ENCODE measurements at regions of chr2 and their contacts with region 1.

Region 1: GRCh38 chr2:110812726-110813645 is 80.6 kb downstream of the ACOXL start:
- DNase-seq: peak; percentile 20
- ATAC-seq: peak; percentile 44
- H3K4me3 Mint-ChIP-seq: no peak overlapping the region
- H3K27ac Mint-ChIP-seq: no peak overlapping the region
- H3K4me1 Mint-ChIP-seq: peaks cover 18% of the 10 kb centered on the region
- H3K27me3 Mint-ChIP-seq: peaks cover 11% of the 10 kb centered on the region
- CTCF ChIP-seq: no peak

Region 2: GRCh38 chr2:110780461-110780860 is 32.5 kb before region 1 on chr2:
- CTCF ChIA-PET with region 1: no interaction called
- POLR2A ChIA-PET with region 1: no interaction called
- intact Hi-C with region 1: no loop called
- DNase-seq: no peak
- ATAC-seq: no peak
- H3K4me3 Mint-ChIP-seq: no peak overlapping the region
- H3K27ac Mint-ChIP-seq: no peak overlapping the region
- H3K4me1 Mint-ChIP-seq: no peaks in the 10 kb centered on the region
- H3K27me3 Mint-ChIP-seq: peaks cover 25% of the 10 kb centered on the region
- CTCF ChIP-seq: no peak

Region 3: DNA sequence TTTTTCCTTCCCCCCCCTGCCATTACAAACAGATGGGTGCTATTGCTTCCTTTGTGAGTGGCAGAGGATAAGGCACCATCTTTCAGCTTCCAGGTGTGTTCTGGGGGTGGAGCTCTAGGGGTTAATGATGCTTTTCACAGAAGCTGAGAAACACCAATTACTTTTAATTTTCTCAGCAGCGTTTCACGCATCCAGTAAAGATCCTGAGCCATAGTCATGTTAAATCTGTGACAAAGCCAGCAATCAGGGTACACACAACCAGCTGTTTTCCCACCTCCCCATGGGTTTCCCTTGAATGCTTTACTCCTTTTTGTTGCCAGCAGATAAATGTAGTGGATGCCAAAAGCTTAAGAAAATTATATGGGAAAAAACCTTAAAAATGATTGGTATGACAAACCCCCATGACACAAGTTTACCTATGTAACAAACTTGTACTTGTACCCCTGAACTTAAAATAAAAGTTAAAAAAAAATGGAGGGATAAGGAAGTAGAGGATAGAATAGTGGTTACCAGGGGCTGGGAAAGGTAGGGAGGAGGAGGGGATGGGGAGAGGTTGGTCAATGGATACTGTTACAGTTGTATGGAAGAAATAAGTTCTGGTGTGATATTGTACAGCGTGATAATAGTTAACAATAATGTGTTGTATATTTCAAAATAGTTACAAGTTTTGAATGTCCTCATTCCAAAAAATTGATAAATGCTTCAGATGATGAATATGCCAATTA is 10.6 kb before region 1 on chr2:
- CTCF ChIA-PET with region 1: no interaction called
- POLR2A ChIA-PET with region 1: no interaction called
- intact Hi-C with region 1: no loop called
- DNase-seq: no peak
- ATAC-seq: no peak
- H3K4me3 Mint-ChIP-seq: no peak overlapping the region
- H3K27ac Mint-ChIP-seq: no peak overlapping the region
- H3K4me1 Mint-ChIP-seq: peaks cover 17% of the 10 kb centered on the region
- H3K27me3 Mint-ChIP-seq: peaks cover 49% of the 10 kb centered on the region
- CTCF ChIP-seq: no peak

Region 4: GRCh38 chr2:110832740-110833139 is 19.8 kb after region 1 on chr2:
- CTCF ChIA-PET with region 1: interaction called, 16 read pairs
- POLR2A ChIA-PET with region 1: no interaction called
- intact Hi-C with region 1: no loop called
- DNase-seq: no peak
- ATAC-seq: no peak
- H3K4me3 Mint-ChIP-seq: no peak overlapping the region
- H3K27ac Mint-ChIP-seq: no peak overlapping the region
- H3K4me1 Mint-ChIP-seq: peaks cover 24% of the 10 kb centered on the region
- H3K27me3 Mint-ChIP-seq: peaks cover 8% of the 10 kb centered on the region
- CTCF ChIP-seq: no peak

Region 5: DNA sequence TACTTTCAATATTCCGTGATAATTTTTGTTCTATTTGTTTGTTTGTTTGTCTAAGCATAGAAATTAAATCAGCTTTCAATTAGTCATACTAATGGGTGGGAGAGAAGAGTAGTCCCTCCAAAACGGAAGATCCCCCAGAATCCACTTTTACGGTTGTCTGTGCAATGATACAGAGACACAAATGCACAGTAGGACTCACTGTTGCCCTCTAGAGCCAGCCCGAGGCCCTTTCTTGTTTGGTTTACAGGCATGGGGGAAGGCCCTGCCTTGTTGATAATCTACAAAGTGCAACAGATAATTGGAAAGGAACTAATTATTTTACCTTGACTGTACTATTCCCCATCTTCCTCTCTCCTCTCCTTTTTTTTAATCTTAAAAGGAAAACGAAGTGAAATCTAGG is 40.5 kb after region 1 on chr2:
- CTCF ChIA-PET with region 1: interaction called, 43 read pairs
- POLR2A ChIA-PET with region 1: interaction called, 4 read pairs
- intact Hi-C with region 1: loop called (anchors 5 kb)
- DNase-seq: peak; percentile 83
- ATAC-seq: peak; percentile 31
- H3K4me3 Mint-ChIP-seq: no peak overlapping the region
- H3K27ac Mint-ChIP-seq: peak overlapping the region; percentile 72
- H3K4me1 Mint-ChIP-seq: peaks cover 81% of the 10 kb centered on the region
- H3K27me3 Mint-ChIP-seq: peaks cover 6% of the 10 kb centered on the region
- CTCF ChIP-seq: peak; percentile 76

Region 6: GRCh38 chr2:110910423-110910822 is 97.4 kb after region 1 on chr2:
- CTCF ChIA-PET with region 1: no interaction called
- POLR2A ChIA-PET with region 1: no interaction called
- intact Hi-C with region 1: no loop called
- DNase-seq: no peak
- ATAC-seq: peak; percentile 60
- H3K4me3 Mint-ChIP-seq: no peak overlapping the region
- H3K27ac Mint-ChIP-seq: no peak overlapping the region
- H3K4me1 Mint-ChIP-seq: peaks cover 10% of the 10 kb centered on the region
- H3K27me3 Mint-ChIP-seq: peaks cover 7% of the 10 kb centered on the region
- CTCF ChIP-seq: no peak

Region 7: DNA sequence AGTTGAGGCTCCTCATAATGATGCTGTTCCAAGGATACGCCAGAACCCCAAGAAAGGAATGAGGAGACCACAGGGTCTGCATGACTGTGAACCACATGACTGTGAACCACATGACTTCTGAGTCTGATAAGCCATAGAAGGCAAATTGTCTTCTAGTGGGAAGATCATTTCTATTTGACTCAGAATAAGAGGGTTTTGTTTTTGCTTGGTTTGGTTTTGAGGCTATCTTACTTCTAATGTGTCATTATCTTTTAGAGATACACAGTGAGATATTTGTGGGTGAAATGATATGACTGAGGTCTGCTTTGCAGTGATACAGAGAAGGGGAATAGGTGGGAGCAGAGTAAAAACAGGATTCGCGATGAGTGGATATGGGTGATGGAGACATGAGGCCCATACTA is 278.8 kb after region 1 on chr2:
- CTCF ChIA-PET with region 1: interaction called, 14 read pairs
- POLR2A ChIA-PET with region 1: no interaction called
- intact Hi-C with region 1: no loop called
- DNase-seq: no peak
- ATAC-seq: peak; percentile 90
- H3K4me3 Mint-ChIP-seq: no peak overlapping the region
- H3K27ac Mint-ChIP-seq: no peak overlapping the region
- H3K4me1 Mint-ChIP-seq: peaks cover 15% of the 10 kb centered on the region
- H3K27me3 Mint-ChIP-seq: peaks cover 24% of the 10 kb centered on the region
- CTCF ChIP-seq: no peak

Region 8: DNA sequence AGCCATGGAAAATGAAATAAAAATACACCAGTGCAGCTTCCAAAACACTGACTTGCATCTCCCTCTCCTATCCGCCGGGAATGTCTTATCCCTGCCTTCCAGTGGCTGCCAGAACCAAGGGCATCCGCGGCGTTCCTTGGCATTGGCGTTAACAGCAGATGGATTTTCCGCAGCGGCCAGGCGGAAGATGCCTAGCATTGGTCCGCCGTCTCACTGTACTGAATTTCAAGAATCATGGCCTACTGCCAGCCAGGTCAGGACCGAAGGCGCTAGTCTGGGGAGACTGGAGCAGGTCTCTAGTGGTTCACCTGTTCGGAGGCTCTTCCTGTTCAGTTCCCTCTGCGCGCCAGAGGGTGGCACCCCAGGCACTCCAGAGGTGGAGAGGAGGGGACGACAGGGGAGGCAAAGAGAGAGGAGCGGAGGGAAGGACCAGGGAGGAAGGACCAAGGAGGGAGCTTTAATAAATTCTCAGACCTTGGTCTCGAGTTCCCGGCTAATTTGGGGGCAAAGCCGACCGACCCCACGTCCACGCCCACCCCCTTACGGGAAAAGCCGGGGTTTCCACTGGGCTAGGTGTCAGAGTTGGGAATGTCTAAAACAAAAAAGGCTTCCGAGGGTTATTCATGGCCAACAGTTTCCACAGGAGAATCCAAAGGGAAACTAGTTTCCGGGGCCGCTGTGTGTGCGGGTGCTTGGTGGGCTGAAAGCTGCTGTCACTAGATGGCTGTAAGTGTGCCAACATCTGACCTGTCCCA is 304.0 kb after region 1 on chr2:
- CTCF ChIA-PET with region 1: interaction called, 18 read pairs
- POLR2A ChIA-PET with region 1: no interaction called
- intact Hi-C with region 1: loop called (anchors 5 kb)
- DNase-seq: peak; percentile 80
- ATAC-seq: peak; percentile 42
- H3K4me3 Mint-ChIP-seq: peak overlapping the region; percentile 95
- H3K27ac Mint-ChIP-seq: peak overlapping the region; percentile 26
- H3K4me1 Mint-ChIP-seq: peaks cover 45% of the 10 kb centered on the region
- H3K27me3 Mint-ChIP-seq: peaks cover 40% of the 10 kb centered on the region
- CTCF ChIP-seq: peak; percentile 84

Measured in activated CD8-positive, alpha-beta T cell treated with anti-CD3 and anti-CD28 coated beads for 36 hours (primary cell).